Endothelial cell of umbilical vein (primary cell): ENCODE measurements at regions of chr6 and their contacts with region 1.

Region 1: DNA sequence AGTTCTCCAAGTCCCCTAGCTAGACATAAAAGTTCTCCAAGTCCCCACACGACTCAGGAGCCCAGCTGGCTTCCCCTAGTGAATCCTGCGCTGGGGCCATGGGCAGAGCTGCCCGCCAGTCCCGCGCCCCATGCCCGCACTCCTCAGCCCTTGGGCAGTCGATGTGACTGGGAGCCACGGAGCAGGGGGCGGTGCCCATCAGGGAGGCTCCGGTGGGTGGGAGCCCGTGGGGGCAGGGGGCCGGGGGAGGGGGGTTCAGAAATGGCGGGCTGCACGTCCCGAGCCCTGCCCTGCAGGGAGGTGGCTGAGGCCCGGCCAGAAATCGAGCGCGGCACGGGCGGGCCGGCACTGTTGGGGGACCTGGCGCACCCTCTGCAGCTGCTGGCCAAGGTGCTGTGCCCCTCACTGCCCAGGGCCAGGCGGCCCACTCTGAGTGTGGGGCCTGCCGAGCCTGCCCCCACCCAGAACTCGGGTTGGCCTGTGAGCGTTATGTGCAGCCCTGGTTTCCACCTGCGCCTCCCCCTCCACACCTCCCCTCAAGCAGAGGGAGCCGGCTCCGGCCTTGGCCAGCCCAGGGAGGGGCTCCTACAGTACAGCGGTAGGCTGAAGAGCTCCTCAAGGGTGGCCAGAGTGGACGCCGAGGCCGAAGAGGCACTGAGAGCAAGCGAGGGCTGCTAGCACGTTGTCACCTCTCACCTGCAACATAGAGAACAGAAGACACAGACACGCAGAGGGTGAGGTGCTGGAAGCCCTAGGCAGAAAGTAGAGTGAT is 11.4 kb downstream of the GSTA5 start:
- DNase-seq: no peak
- H3K4me3 ChIP-seq: no peak overlapping the region
- H3K27ac ChIP-seq: no peak overlapping the region
- H3K4me1 ChIP-seq: no peaks in the 10 kb centered on the region
- H3K27me3 ChIP-seq: no peaks in the 10 kb centered on the region
- CTCF ChIP-seq: no peak
- POLR2A ChIP-seq: no peak

Region 2: DNA sequence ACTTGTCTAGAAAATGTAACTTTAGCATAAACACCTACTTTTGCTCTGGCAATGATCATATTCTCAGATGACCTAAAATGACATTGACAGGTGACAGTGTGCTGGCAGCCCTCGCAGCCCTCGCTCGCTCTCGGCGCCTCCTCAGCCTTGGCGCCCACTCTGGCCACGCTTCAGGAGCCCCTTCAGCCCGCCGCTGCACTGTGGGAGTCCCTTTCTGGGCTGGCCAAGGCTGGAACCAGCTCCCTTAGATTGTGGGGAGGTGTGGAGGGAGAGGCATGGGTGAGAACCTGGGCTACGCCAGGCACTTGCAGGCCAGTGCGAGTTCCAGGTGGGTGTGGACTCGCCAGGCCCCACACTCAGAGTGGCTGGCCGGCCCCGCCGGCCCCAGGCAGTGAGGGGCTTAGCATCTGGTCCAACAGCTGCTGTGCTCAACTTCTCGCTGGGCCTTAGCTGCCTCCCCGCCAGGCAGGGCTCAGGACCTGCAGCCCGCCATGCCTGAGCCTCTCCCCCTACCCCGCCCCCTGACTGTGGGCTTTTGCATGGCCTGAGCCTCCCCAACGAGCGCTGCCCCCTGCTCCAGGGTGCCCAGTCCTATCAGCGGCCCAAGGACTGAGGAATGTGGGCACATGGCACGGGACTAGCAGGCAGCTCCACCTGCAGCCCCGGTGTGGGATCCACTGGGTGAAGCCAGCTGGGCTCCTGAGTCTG is 42.8 kb before region 1 on chr6:
- CTCF ChIA-PET with region 1: no interaction called
- POLR2A ChIA-PET with region 1: no interaction called
- dilution Hi-C with region 1: no loop called
- intact Hi-C with region 1: loop called (anchors 1 kb)
- DNase-seq: no peak
- H3K4me3 ChIP-seq: no peak overlapping the region
- H3K27ac ChIP-seq: no peak overlapping the region
- H3K4me1 ChIP-seq: no peaks in the 10 kb centered on the region
- H3K27me3 ChIP-seq: no peaks in the 10 kb centered on the region
- CTCF ChIP-seq: no peak
- POLR2A ChIP-seq: no peak

Region 3: GRCh38 chr6:53309059-53309900 is 480.0 kb after region 1 on chr6:
- CTCF ChIA-PET with region 1: no interaction called
- POLR2A ChIA-PET with region 1: no interaction called
- dilution Hi-C with region 1: no loop called
- intact Hi-C with region 1: no loop called
- DNase-seq: peak; percentile 29
- H3K4me3 ChIP-seq: no peak overlapping the region
- H3K27ac ChIP-seq: peak overlapping the region; percentile 34
- H3K4me1 ChIP-seq: peaks cover 33% of the 10 kb centered on the region
- H3K27me3 ChIP-seq: no peaks in the 10 kb centered on the region
- CTCF ChIP-seq: no peak
- POLR2A ChIP-seq: no peak